ENCODE measurements at regions of chr12 and their contacts with region 1.

Region 1: DNA sequence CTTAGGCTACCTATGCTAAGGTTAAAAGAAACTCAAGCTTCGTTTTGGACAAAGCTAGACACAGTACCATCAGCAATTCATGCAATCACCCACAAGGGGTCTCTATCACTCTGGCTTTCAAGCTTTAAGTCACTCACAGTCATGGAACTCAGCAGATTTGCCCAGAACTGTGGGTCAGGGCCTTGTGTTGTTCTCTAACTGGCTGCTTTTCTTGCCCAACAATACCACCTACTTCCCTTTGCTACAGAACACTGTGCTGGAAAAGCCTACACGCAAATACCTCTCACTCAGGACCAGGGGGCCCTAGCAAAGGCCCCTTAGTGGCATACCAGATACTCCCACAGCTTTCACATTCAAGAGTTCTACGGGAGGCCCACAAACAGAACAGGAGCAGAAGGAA is 9.1 kb downstream of the NEMP1 start:
- DNase-seq: peak in 1 of 3 donors; percentile 85
- ATAC-seq: peak; percentile 98
- H3K4me3 ChIP-seq: no peak overlapping the region
- H3K4me1 ChIP-seq: peaks cover 5% of the 10 kb centered on the region
- CTCF ChIP-seq: peak; percentile 69

Region 2: DNA sequence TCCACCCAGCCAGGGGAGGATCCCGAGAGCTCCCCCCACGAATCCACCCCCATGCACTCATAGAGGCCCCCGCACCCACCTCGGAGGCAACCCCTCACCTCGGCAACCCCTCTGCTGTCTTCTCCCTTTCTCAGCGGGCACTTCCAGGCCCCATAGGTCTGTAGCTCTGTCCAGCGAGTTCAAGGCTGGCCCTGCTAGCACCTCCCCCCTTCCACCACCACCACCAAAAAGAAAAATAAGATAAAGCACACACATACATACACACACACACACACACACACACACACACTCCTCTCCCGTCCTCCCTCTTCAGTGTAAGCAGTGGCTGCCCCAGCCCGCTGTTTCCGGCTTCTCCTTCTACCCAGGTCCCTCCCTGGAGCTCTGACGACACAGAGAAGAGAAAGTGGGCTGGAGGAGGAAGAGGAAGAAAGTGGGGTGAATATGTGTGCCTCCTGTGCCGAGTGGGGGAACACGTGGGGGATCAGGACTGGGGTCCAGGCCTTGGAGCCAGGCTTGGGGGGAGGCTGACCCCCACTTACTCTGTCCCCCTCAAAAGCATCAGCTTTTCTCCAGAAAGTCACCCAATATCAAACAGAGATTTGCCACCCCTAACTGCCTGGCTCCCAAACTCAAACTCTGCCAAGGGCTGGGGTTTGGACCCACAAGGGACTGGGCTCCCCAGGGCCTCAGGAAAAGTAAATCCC is 41.7 kb after region 1 on chr12 and contains the start of gene STAT6:
- intact Hi-C with region 1: loop called (anchors 5 to 10 kb)
- DNase-seq: peak; percentile 86 to 93 (median 93)
- ATAC-seq: peak; percentile 83
- H3K4me3 ChIP-seq: peak within 1 kb of the TSS; percentile 48
- H3K4me1 ChIP-seq: peaks cover 14% of the 10 kb centered on the region
- CTCF ChIP-seq: no peak
- total RNA-seq, gene STAT6: 219 to 286 (median 281) TPM

Region 3: DNA sequence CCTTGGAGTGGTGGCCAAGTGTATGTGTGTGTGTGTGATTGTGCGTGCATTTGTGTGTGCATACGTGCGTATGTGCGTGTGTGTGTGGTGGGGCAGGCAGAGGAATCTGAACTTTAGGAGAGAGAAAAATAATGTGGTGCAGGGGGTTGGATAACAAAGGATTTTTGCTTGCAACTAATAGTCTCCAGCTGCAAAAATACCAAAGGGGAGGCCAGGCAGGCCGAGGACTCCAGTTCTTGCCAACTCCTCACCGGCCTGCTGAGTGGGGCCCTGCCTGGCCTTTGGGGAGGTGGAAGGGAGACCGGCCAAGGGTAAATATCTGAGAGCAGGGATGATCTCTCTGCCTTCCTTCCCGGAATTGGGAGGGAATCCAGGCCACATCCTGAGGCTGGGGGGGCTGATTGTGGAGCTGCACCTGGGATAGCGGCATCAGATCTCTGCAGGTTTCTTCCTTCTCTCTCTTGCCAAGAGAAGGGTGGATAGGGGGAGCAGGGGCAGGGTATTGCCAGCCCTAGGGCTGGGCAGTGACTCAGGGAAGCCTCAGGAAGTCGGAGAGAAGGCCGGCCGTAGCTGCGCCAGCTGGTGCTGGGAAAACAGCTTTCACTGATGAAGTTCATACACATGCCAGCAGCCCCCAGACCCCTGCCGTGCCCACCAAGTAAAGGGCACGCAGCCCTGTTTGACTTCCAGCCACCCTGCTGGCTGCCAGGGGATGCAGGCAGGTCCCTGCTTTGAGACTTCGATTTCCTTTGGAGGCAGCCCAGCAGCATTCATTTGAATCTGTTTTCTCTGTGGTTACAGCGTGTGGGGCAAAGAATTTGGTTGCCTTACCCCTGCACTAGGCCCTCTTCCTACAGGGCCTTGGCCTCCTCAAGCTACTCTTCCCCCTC is 82.5 kb after region 1 on chr12:
- intact Hi-C with region 1: no loop called
- DNase-seq: no peak
- ATAC-seq: no peak
- H3K4me3 ChIP-seq: no peak overlapping the region
- H3K4me1 ChIP-seq: peaks cover 38% of the 10 kb centered on the region
- CTCF ChIP-seq: no peak

Region 4: DNA sequence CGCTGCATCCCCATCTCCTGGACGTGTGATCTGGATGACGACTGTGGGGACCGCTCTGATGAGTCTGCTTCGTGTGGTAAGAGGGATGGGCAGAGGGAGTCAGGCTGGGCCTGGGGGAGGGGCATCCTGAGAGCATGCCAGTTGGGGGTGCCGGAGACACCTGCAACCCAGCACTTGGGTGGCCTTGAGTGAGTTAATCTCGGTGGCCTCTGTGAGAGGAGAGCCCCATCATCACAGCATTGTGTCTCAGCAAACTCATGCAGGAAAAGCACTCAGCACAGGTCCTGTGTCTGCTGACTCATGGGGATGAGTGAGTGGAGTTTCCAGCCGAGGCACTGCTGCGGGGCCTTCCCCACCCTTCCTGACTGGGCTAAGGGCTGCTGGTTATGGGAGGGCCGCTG is 97.4 kb after region 1 on chr12:
- intact Hi-C with region 1: loop called in 1 of 2 experiments (anchors 10 kb)
- DNase-seq: no peak
- ATAC-seq: no peak
- H3K4me3 ChIP-seq: no peak overlapping the region
- H3K4me1 ChIP-seq: no peaks in the 10 kb centered on the region
- CTCF ChIP-seq: no peak